Motor neuron (in vitro differentiated cells): ENCODE measurements at regions of chr7 and their contacts with region 1.

Region 1: GRCh38 chr7:15326044-15326644 is 235.7 kb downstream of the AGMO start:
- ATAC-seq: peak in 1 of 8 experiments; percentile 56
- H3K4me3 ChIP-seq: no peak overlapping the region
- H3K27ac ChIP-seq: no peak overlapping the region
- H3K4me1 ChIP-seq: no peaks in the 10 kb centered on the region

Region 2: GRCh38 chr7:15503603-15504290 is 177.6 kb after region 1 on chr7:
- in situ Hi-C with region 1: loop called in 1 of 9 experiments (anchors 25 kb)
- ATAC-seq: peak in 2 of 8 experiments; percentile 33 to 60
- H3K4me3 ChIP-seq: no peak overlapping the region
- H3K27ac ChIP-seq: no peak overlapping the region
- H3K4me1 ChIP-seq: no peaks in the 10 kb centered on the region